Activated T-helper 1 cell treated with anti-CD3 and anti-CD28 coated beads, Interleukin-12 subunit alpha, Interleukin-12 subunit beta, Interleukin-2, Interleukin-4 antibody, amounts not matched to agents 30 ng/mL and 10 ng/mL and 1 ng/mL, durations not matched to agents 14 hours and 24 hours and 36 hours (primary cell): ENCODE measurements at regions of chr12 and their contacts with region 1.

Region 1: DNA sequence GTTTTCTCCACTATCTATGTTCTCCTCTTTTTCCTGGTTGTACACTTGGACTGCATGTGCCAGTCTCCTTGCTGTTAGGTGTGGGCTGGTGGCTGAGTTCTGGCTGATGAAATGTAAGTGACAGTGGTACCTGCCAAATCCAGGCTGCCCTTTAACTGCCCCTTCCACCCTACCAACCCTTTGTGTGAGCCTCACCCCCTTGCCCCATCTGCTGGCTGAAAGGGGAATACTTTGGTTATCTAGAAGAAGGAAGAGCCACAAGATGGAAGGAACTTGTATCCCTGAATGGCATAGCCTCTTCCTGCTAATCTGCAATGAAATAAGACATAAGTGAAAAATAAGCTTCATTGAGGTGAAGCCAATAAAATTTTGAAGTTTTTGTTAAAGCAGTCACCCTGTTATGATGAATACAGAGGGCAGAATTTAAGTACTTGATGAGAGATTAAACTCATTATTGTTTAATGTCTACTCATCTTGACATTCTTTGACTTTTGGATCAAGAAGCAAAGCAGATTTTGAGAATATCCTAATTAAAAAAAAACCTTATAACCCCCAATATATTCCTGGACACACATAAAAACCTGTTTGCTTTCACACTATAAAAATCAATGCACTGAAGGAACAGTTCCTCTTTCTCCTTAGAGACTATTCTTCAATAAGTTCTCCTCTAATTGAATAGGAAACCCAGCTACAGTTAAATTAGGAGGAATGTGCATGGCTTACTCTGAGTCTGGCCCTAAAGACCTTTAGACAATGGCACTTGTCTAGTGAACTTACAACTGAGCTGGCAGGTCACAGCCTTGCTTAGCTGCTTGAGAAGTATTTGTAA is 262.6 kb upstream of the BTG1 start:
- DNase-seq: peak; percentile 37
- H3K4me3 Mint-ChIP-seq: no peak overlapping the region
- H3K27ac Mint-ChIP-seq: no peak overlapping the region
- H3K4me1 Mint-ChIP-seq: peaks cover 46% of the 10 kb centered on the region
- H3K27me3 Mint-ChIP-seq: no peaks in the 10 kb centered on the region

Region 2: DNA sequence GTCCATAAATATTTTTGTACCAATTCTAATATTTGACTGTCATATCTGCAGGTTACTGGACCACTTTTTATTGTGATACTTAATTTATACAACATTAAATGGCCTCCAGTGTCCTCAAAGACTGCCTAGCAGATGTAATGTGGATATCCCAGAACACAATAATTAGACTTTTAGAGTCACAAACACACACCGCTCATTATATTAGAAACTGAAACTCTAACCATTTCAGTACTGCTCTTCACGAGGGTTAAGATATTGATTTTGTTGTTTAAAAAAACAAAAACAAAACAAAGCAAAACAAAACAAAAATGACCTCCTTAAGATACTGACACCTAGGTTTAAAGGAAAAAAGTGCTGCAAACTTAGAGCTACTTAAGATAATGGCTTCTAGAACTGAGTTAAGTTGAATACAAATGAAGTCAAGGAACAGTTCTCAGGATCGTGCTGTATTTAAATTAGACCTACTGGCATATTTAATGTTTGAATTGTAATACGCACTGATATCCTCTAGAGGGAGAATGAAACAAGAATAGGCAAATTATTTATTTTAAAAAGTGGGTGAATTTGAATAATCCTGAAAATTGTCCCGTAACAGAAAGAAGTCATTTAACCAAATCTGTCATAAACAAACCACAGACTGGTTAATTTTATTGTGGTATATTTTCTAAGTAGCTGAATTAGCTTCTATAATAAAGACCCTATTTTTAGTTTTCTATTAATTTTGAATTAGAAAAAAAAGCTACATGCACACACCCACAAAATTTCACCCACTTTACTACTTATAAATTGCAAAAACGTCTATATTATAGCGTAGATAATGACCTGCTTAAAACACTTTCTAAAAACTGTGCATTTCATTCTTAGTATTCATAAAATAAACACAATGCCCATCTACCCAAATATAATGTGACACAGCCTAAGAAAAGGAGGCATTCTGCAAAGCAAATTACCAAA is 830.4 kb before region 1 on chr12:
- intact Hi-C with region 1: loop called (anchors 10 kb)
- DNase-seq: no peak
- H3K4me3 Mint-ChIP-seq: peak overlapping the region; percentile 62
- H3K27ac Mint-ChIP-seq: no peak overlapping the region
- H3K4me1 Mint-ChIP-seq: peaks cover 6% of the 10 kb centered on the region
- H3K27me3 Mint-ChIP-seq: peaks cover 15% of the 10 kb centered on the region

Region 3: DNA sequence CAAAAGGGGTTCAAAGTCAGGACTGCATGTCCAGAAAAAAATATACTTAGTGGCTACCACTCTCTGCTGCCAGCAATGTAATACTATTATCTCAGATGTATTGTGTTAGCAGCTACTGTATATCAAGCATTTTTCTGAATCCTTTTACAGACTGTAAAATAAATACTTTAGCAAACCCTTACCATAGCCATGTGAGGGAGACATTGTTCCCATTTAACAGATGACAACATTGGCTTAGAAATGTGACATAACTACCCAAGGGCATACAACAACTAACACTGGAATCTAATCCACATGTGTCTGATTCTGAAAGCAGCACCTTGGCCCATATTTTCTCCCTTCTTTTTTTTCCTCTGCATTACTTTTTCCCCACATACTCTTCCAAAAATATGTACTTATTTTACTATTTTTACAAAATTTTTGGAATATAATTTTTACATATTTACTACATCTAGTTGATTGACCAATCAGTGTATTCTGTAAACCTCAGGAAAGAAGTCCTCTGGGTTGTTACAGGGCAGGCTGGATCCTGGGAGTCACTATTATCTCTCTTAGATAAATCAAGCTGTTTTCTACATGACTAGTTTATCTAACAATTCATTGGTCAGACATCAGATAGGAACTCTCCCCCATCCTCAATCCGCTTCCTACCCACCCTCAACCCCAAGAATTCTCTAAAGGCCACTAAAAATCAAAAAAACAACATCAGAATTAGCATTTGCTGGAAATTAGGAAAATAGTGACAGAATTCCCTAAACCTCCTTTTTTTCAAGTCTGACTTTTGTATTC is 416.7 kb before region 1 on chr12:
- intact Hi-C with region 1: loop called (anchors 10 kb)
- DNase-seq: no peak
- H3K4me3 Mint-ChIP-seq: no peak overlapping the region
- H3K27ac Mint-ChIP-seq: no peak overlapping the region
- H3K4me1 Mint-ChIP-seq: peaks cover 4% of the 10 kb centered on the region
- H3K27me3 Mint-ChIP-seq: no peaks in the 10 kb centered on the region

Region 4: GRCh38 chr12:92208613-92209121 is 199.6 kb before region 1 on chr12:
- intact Hi-C with region 1: loop called (anchors 1 kb)
- DNase-seq: peak; percentile 26
- H3K4me3 Mint-ChIP-seq: peak overlapping the region; percentile 72
- H3K27ac Mint-ChIP-seq: peak overlapping the region; percentile 94
- H3K4me1 Mint-ChIP-seq: peaks cover 46% of the 10 kb centered on the region
- H3K27me3 Mint-ChIP-seq: no peaks in the 10 kb centered on the region

Region 5: DNA sequence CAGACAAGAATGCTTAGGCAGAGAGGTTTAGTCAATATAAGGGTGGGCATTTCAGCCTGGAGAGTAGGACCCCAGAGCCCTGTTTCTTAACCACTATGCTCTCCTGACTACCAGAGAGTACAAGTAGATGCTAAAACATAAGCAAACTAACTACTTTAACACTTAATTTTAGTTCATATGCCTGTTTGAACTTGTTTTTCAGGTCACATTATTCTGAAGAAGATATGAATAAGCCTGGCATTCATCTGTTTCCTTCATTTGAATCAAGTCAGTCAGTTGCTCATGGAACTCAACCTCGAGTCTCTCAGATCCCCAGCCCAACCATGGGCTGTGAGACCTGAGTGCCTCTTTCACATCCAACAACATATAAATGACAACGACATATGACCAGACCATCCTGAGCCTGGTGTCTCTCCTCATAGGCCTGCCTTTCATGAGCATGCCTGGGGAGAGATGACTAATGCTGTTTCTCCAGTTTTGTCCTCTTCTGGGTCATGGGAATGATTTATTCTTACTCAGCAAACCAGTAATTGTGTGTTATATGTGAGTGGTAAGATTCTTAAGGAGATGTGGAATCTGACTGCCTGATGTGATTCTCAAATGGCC is 11.5 kb before region 1 on chr12:
- intact Hi-C with region 1: loop called (anchors 2 kb)
- DNase-seq: no peak
- H3K4me3 Mint-ChIP-seq: no peak overlapping the region
- H3K27ac Mint-ChIP-seq: no peak overlapping the region
- H3K4me1 Mint-ChIP-seq: peaks cover 75% of the 10 kb centered on the region
- H3K27me3 Mint-ChIP-seq: no peaks in the 10 kb centered on the region

Region 6: DNA sequence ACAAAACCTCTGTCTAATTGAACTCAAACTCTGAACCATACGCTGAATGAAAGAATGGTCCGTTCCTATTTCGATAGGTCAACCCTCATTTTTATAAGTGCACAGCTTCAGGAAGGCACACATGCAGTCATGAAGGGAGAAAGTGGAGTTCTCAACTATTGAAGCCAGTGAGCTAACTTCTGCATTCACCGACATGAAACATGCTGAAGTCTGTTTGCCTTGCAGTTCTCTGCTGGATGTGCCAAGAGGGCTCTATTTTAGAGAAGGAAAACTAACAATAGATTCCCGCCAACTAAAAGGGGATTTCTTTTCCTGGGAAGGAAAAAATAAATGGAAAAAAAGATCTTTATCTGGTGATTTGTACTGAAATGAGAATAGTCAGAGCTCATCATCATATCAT is 103.5 kb after region 1 on chr12:
- intact Hi-C with region 1: no loop called
- DNase-seq: no peak
- H3K4me3 Mint-ChIP-seq: no peak overlapping the region
- H3K27ac Mint-ChIP-seq: no peak overlapping the region
- H3K4me1 Mint-ChIP-seq: peaks cover 36% of the 10 kb centered on the region
- H3K27me3 Mint-ChIP-seq: no peaks in the 10 kb centered on the region

Region 7: DNA sequence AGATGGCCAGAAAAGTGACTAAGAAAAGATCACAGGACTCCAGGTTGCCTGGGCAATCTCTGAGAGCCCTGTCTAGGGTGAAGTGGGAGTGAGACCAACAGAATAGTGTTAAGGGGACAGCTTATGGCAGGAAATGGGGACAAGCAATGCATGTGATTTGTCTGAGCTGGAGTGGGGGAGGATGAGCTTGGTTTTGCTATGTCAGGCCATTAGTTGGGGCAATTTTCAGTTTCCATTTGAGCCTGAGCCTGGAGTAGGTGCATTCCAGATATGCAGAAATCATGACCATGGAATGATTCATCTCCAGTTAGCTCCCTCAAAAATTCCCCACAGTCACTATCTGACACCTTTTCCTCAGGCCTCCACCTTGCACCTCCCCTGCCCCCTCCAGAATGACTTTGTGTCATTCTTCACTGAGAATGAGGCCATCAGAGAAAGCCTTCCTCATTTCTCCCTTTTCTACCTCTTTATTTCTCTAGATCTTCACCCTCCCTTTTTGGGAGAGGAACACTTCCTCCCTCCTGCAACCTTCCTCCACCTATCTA is 143.6 kb after region 1 on chr12:
- intact Hi-C with region 1: loop called (anchors 1 kb)
- DNase-seq: no peak
- H3K4me3 Mint-ChIP-seq: no peak overlapping the region
- H3K27ac Mint-ChIP-seq: no peak overlapping the region
- H3K4me1 Mint-ChIP-seq: peaks cover 31% of the 10 kb centered on the region
- H3K27me3 Mint-ChIP-seq: no peaks in the 10 kb centered on the region

Region 8: DNA sequence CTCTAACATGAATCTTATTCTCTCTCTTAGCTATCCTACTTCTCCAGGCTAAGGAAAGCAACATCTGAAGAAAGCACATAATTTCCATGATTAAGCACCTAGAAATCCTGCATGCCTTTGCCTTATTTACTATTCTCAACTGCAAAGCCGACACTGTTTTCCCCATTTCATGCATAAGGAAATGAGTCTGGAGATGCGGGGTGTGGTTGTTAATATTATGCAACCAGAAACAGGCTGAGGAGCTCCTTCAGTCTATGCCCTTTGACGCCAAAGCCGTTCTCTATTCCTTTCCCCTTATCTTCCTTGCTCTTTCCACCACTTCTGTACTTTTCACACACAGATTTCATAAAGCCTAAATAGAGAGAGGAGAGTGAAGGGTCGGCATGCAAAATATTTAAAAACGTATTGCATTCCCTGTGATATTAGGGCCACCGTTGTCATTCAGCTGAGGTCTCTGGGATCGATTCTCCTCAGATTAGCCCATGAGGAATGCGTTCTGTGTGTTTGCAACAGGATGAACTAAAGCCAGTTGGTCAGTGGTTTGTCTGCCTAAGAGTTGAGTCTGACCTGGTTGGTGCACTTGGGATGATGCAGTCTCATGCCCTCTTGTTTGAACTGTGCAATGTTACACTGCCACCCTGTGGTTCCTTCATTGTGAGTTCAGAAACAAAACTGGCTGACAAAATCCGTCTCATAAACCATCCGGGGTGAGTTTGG is 241.4 kb after region 1 on chr12:
- intact Hi-C with region 1: loop called (anchors 1 kb)
- DNase-seq: peak; percentile 40
- H3K4me3 Mint-ChIP-seq: no peak overlapping the region
- H3K27ac Mint-ChIP-seq: no peak overlapping the region
- H3K4me1 Mint-ChIP-seq: peaks cover 10% of the 10 kb centered on the region
- H3K27me3 Mint-ChIP-seq: no peaks in the 10 kb centered on the region